MCF 10A (cell line): ENCODE measurements at regions of chr5 and their contacts with region 1.

Region 1: GRCh38 chr5:142915813-142916424 is 145.7 kb downstream of the ARHGAP26 start:
- DNase-seq: peak; percentile 78
- H3K4me3 Mint-ChIP-seq: no peak overlapping the region
- H3K27ac Mint-ChIP-seq: no peak overlapping the region
- H3K4me1 Mint-ChIP-seq: peaks cover 7% of the 10 kb centered on the region
- H3K27me3 Mint-ChIP-seq: no peaks in the 10 kb centered on the region
- CTCF ChIP-seq: peak; percentile 79

Region 2: DNA sequence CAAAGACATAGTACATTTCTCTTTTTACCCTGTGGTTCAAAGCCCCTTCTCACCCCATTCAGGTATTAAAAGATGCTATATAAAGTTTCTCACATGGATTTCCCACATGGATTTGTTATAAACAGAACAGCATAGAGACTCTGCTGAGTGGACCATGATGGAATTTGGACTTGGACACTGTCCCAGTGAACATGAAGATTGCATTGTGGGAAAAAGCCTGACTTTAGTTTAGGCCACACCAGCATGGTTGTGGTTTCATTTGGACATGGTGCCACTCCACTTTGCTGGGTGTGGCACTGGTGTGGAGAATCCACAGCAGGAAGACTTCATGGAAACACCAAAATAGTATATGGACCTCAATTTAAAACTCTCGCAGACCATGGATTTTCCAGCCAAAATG is 21.2 kb before region 1 on chr5:
- CTCF ChIA-PET with region 1: interaction called, 122 read pairs
- POLR2A ChIA-PET with region 1: no interaction called
- intact Hi-C with region 1: no loop called
- DNase-seq: peak; percentile 31
- H3K4me3 Mint-ChIP-seq: no peak overlapping the region
- H3K27ac Mint-ChIP-seq: no peak overlapping the region
- H3K4me1 Mint-ChIP-seq: peaks cover 19% of the 10 kb centered on the region
- H3K27me3 Mint-ChIP-seq: no peaks in the 10 kb centered on the region
- CTCF ChIP-seq: no peak

Region 3: DNA sequence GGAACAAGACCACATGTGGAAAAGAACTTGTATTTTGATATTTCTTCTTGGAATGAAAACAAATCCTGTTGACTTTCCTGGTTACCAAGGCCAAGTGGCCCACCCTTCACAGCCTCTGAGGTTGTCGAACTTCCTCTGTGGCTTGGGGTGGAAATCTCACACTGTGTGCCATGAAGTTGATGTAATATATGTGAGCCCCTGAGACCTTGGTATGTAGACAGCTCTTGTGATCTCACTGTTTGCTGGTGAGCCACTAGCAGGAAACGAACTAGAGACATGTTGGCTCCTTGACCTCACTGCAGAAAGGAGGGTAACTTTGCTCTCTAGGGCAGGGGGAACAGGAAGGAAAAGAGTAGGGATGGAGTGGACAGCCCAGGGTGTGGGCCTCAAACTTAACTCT is 13.7 kb after region 1 on chr5:
- CTCF ChIA-PET with region 1: interaction called, 18 read pairs
- POLR2A ChIA-PET with region 1: interaction called, 12 read pairs
- intact Hi-C with region 1: no loop called
- DNase-seq: no peak
- H3K4me3 Mint-ChIP-seq: no peak overlapping the region
- H3K27ac Mint-ChIP-seq: no peak overlapping the region
- H3K4me1 Mint-ChIP-seq: peaks cover 19% of the 10 kb centered on the region
- H3K27me3 Mint-ChIP-seq: no peaks in the 10 kb centered on the region
- CTCF ChIP-seq: no peak

Region 4: GRCh38 chr5:142938266-142938880 is 22.5 kb after region 1 on chr5:
- CTCF ChIA-PET with region 1: interaction called, 16 read pairs
- POLR2A ChIA-PET with region 1: interaction called, 3 read pairs
- intact Hi-C with region 1: no loop called
- DNase-seq: no peak
- H3K4me3 Mint-ChIP-seq: no peak overlapping the region
- H3K27ac Mint-ChIP-seq: no peak overlapping the region
- H3K4me1 Mint-ChIP-seq: no peaks in the 10 kb centered on the region
- H3K27me3 Mint-ChIP-seq: no peaks in the 10 kb centered on the region
- CTCF ChIP-seq: no peak